Dorsolateral prefrontal cortex (tissue), 120 donors: ENCODE measurements at regions of chr21 and their contacts with region 1.

Region 1: GRCh38 chr21:34526618-34527290 is 14.7 kb upstream of the KCNE1 start:
- DNase-seq: peak in 3 of 10 donors; percentile 42 to 46 (median 45)
- H3K4me3 ChIP-seq: peak overlapping the region; percentile 1 to 63 (median 46)
- H3K27ac ChIP-seq: peak overlapping the region in 55 of 59 donors; percentile 14 to 90 (median 70)
- H3K27me3 ChIP-seq: no peaks in the 10 kb centered on the region
- CTCF ChIP-seq: peak in 2 of 56 donors; percentile 6 to 9

Region 2: DNA sequence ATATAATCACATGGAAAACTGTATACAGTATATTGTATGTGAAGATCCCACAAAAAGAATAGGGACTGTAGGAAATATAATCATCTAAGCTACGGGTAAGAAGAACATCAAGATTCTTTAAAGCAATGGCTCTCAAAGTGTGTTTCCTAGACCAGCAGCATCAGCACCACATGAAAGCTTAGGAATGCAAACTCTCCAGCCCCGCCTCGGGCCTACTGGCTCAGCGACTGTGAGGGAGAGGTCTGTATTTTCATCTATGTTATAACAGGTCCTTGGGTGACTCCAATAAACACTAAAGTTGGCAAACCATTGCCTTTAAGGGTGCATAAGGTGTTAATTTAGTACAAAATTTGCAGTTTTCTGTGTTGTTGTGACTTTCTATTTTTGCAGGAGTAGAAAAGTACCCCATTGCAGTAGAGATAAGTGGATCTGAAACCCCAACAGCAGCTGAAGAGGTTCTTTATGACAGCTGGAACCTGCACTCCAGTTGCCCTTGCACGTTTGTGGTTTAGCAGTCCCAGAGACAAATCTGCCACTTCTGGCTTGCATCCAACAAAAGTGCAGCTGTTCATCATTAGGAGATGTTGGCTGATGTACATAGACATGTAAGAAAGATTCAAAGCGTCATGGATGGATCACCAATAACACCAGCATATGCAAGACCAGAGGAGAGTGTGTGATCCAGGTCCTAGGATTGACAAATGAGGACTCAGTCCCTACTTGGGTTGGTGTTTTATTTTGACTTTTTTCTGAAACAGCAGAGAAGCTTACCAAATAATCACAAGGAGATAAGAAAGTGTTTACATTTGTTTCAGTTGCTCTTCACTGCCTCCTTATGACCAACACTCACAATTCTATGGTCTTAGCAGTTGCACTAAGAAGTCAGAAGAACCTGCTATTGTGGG is 1217.9 kb before region 1 on chr21:
- intact Hi-C with region 1: no loop called
- DNase-seq: no peak
- H3K4me3 ChIP-seq: no peak overlapping the region
- H3K27ac ChIP-seq: no peak overlapping the region
- H3K27me3 ChIP-seq: no peaks in the 10 kb centered on the region
- CTCF ChIP-seq: no peak

Region 3: GRCh38 chr21:34592120-34592955 is 65.6 kb after region 1 on chr21:
- intact Hi-C with region 1: loop called (anchors 5 kb)
- DNase-seq: peak in 3 of 10 donors; percentile 26 to 51 (median 48)
- H3K4me3 ChIP-seq: peak overlapping the region in 29 of 59 donors; percentile 0 to 43 (median 18)
- H3K27ac ChIP-seq: peak overlapping the region in 36 of 59 donors; percentile 1 to 67 (median 39)
- H3K27me3 ChIP-seq: no peaks in the 10 kb centered on the region
- CTCF ChIP-seq: no peak